ENCODE measurements at regions of chr1 and their contacts with region 1.

Region 1: DNA sequence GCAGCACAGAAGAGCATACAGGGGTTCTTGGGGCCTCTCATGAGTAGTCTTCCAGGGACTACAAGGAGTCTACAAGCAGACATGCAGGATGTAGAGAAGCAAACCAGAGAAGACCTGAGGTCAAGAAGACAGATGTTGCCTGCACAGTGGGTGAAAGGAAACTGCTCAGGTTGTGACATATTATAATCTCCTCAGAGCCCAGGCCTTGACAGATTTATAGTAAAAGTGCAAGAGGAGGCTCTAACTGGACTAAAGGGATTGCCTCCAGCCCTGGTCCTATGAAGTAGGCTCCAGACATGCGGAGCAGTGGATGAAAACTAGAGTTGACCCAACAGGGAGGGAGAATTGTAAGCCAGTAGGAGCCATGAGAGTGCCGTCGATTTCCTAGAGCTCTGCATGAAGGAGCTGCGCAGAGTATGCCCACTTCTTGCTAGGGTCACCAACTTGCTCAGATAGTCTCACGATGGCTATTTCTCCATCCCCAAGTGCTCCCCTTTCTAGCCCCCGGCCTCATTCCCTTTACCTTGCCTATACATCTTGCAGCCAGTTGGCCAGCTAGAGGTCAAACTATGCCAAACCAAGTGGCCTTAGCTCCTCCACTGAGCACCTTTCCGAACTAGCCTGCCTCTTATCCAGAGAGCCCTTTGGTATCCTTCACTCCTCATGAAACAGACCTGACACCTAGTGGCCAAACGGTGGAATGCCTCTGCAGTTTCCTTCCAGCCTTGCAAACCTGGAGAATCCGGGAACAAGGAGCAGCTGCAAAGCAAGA is 36.2 kb upstream of the IPO9 start:
- DNase-seq: peak in 2 of 3 donors; percentile 72 to 81
- ATAC-seq: peak; percentile 94
- H3K4me3 ChIP-seq: no peak overlapping the region
- H3K4me1 ChIP-seq: peaks cover 13% of the 10 kb centered on the region
- CTCF ChIP-seq: peak; percentile 84

Region 2: GRCh38 chr1:201559679-201560162 is 233.0 kb before region 1 on chr1:
- intact Hi-C with region 1: loop called in 1 of 2 experiments (anchors 5 kb)
- DNase-seq: peak; percentile 78 to 84 (median 82)
- ATAC-seq: peak; percentile 96
- H3K4me3 ChIP-seq: no peak overlapping the region
- H3K4me1 ChIP-seq: peaks cover 4% of the 10 kb centered on the region
- CTCF ChIP-seq: peak; percentile 79

Region 3: DNA sequence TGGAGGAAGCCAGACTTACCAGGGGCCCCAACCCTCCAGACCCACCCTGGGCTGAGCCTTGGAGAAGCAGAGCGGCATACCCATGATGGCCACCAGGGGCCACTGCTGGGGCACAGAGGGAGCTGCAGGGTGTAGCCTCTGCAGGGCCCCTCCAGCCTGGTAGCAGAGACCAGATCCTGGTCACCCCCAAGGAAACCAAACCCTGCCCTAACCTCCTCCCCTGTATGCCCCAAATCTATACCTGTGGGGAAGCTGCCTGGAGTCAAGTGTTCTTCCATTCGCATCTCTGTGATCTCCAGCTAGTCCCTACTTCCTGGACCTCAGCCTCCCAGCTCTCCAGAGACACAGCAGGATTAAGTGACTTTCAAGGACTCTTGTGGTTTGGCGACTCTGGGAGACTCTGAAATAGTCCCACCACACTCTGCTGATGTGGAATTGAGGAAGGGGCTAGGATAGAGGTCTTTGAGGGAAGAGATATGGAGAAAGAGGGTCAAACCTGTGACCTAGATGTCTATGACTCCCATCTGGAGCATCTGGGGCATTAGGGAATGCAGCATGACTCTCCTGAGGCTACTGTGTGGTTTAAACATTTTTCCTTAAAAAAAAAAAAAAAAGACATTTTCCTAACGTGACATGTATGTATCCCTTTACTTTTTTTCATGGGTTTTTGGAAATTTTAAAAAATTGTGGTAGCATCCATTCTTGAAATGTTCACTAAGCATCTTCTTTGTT is 83.0 kb before region 1 on chr1:
- intact Hi-C with region 1: loop called (anchors 2 to 5 kb)
- DNase-seq: peak in 2 of 3 donors; percentile 78 to 79
- ATAC-seq: peak; percentile 67
- H3K4me3 ChIP-seq: no peak overlapping the region
- H3K4me1 ChIP-seq: peaks cover 20% of the 10 kb centered on the region
- CTCF ChIP-seq: peak; percentile 85

Region 4: GRCh38 chr1:201870397-201870796 is 77.7 kb after region 1 on chr1:
- intact Hi-C with region 1: no loop called
- DNase-seq: no peak
- ATAC-seq: no peak
- H3K4me3 ChIP-seq: no peak overlapping the region
- H3K4me1 ChIP-seq: no peaks in the 10 kb centered on the region
- CTCF ChIP-seq: no peak